ENCODE measurements at regions of chr1 and their contacts with region 1.

Region 1: GRCh38 chr1:234722904-234723720 is 113.1 kb upstream of the IRF2BP2 start:
- DNase-seq: peak; percentile 95
- H3K4me3 ChIP-seq: peak overlapping the region; percentile 24 to 34 (median 28)
- H3K27ac ChIP-seq: peak overlapping the region; percentile 91 to 98 (median 98)
- H3K4me1 ChIP-seq: peaks cover 95 to 97% (median 96%) of the 10 kb centered on the region in 4 donors
- H3K27me3 ChIP-seq: no peaks in the 10 kb centered on the region
- CTCF ChIP-seq: no peak
- EP300 ChIP-seq: no peak
- POLR2A ChIP-seq: no peak

Region 2: GRCh38 chr1:234499119-234499942 is 223.8 kb before region 1 on chr1:
- intact Hi-C with region 1: loop called (anchors 5 kb)
- DNase-seq: peak; percentile 98
- H3K4me3 ChIP-seq: peak overlapping the region; percentile 28 to 46 (median 35)
- H3K27ac ChIP-seq: peak overlapping the region; percentile 85 to 90 (median 87)
- H3K4me1 ChIP-seq: peaks cover 15 to 55% (median 49%) of the 10 kb centered on the region in 4 donors
- H3K27me3 ChIP-seq: no peaks in the 10 kb centered on the region
- CTCF ChIP-seq: peak; percentile 94 to 98 (median 97)
- EP300 ChIP-seq: no peak
- POLR2A ChIP-seq: no peak

Region 3: GRCh38 chr1:234610348-234611152 is 112.6 kb before region 1 on chr1:
- intact Hi-C with region 1: loop called (anchors 2 kb)
- DNase-seq: peak; percentile 99
- H3K4me3 ChIP-seq: peak overlapping the region; percentile 52 to 87 (median 62)
- H3K27ac ChIP-seq: peak overlapping the region; percentile 92 to 100 (median 98)
- H3K4me1 ChIP-seq: peaks cover 28 to 43% (median 40%) of the 10 kb centered on the region in 4 donors
- H3K27me3 ChIP-seq: no peaks in the 10 kb centered on the region
- CTCF ChIP-seq: no peak
- EP300 ChIP-seq: peak; percentile 63
- POLR2A ChIP-seq: peak; percentile 94

Region 4: GRCh38 chr1:234980645-234981396 is 257.7 kb after region 1 on chr1:
- intact Hi-C with region 1: loop called (anchors 5 kb)
- DNase-seq: peak; percentile 96
- H3K4me3 ChIP-seq: peak overlapping the region; percentile 3 to 29 (median 19)
- H3K27ac ChIP-seq: peak overlapping the region; percentile 91 to 97 (median 94)
- H3K4me1 ChIP-seq: peaks cover 67 to 84% (median 79%) of the 10 kb centered on the region in 4 donors
- H3K27me3 ChIP-seq: no peaks in the 10 kb centered on the region
- CTCF ChIP-seq: peak in 1 of 3 experiments; percentile 0
- EP300 ChIP-seq: peak; percentile 62
- POLR2A ChIP-seq: peak; percentile 23

Region 5: DNA sequence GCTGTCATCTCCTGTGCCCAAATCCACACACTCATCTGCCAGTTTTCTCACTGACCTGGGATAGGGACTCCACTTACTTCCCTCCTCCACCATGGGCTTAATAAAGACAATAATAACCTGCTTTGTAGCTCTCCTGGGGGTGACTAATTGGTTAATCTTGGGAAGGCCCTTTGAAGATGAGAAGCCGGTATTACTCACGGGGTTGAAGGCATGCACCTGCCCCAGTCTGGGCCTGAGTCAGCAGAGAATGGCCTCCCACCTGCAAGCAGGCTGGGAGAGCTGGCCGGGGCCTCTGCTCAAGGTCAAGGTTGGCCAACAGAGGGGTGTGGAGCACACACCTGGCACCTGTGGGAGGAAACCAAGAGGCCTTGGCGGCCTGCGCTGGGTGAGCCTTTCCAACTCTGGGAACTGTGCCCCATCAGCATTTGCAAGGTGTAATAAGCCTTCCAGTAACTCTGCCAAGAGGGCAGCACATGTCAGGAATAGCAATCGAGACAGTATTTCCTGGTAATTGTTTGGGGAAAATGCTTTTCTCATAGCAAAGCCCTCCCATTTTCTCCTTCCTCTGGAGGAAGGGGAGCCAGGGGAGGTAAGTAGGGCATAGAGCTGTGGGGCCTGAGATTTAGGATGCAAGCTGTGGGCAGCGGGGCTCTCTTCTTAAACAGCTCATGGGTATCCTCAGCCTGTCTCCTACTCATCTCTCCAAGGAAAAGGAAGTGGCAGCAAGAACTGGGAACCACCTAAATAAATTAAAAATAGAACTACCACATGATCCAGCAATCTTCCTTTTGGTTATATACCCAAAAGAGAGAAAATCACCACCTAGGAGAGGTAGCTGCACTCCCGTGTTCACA is 356.6 kb after region 1 on chr1:
- intact Hi-C with region 1: loop called (anchors 2 kb)
- DNase-seq: no peak
- H3K4me3 ChIP-seq: no peak overlapping the region
- H3K27ac ChIP-seq: peak overlapping the region; percentile 49 to 89 (median 84)
- H3K4me1 ChIP-seq: peaks cover 56 to 78% (median 75%) of the 10 kb centered on the region in 4 donors
- H3K27me3 ChIP-seq: no peaks in the 10 kb centered on the region
- CTCF ChIP-seq: no peak
- EP300 ChIP-seq: no peak
- POLR2A ChIP-seq: no peak